Motor neuron (in vitro differentiated cells): ENCODE measurements at regions of chr18 and their contacts with region 1.

Region 1: DNA sequence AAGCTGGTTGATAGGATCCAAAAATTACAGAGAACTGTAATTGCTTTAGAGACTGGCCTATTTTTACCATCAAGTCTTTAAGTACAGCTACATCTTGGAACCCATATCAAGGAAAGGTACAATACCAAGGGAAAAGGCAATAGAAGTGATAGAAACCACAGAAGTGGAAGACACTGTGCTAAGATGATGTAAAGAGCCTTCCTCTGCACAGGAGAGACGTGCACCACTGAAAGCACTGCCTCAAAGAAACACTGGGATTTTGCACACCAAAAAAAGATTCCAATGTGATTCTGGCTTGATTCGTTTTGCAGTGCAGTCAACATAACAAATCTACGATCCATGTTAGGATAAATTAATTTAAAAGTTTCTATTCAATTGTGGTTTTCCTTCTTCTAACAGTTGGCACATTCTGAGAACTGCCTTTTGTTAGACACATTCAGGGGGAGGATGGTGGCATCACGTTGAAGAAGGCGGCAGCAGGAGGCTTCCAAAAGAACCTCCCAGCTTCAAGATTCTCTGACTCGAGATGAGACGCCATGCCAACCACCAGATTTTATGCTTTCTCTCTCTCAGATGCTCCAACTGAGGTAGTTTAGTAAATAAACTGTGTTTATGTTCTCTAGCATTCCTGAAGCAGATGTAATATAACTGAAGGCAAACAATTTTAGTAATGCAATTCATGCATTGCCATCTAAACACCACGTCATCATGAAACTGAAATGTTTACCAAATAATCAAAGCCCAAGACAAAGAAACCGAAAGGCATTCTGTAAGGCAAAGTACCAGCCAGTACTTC is 102.9 kb downstream of the BCL2 start:
- ATAC-seq: peak in 2 of 8 experiments; percentile 21 to 55
- H3K4me3 ChIP-seq: no peak overlapping the region
- H3K27ac ChIP-seq: no peak overlapping the region
- H3K4me1 ChIP-seq: peaks cover 8 to 11% of the 10 kb centered on the region in 2 donors

Region 2: GRCh38 chr18:63016270-63016669 is 200.4 kb before region 1 on chr18:
- in situ Hi-C with region 1: no loop called
- ATAC-seq: peak in 5 of 8 experiments; percentile 51 to 78 (median 65)
- H3K4me3 ChIP-seq: no peak overlapping the region
- H3K27ac ChIP-seq: no peak overlapping the region
- H3K4me1 ChIP-seq: no peaks in the 10 kb centered on the region

Region 3: GRCh38 chr18:63320046-63320689 is 103.5 kb after region 1 on chr18:
- in situ Hi-C with region 1: loop called in 1 of 9 experiments (anchors 25 kb)
- ATAC-seq: peak; percentile 78 to 85 (median 84)
- H3K4me3 ChIP-seq: peak overlapping the region; percentile 62 to 94 (median 75)
- H3K27ac ChIP-seq: peak overlapping the region; percentile 85 to 86
- H3K4me1 ChIP-seq: peaks cover 18 to 29% of the 10 kb centered on the region in 2 donors

Region 4: GRCh38 chr18:63487676-63488075 is 271.0 kb after region 1 on chr18:
- in situ Hi-C with region 1: no loop called
- ATAC-seq: no peak
- H3K4me3 ChIP-seq: no peak overlapping the region
- H3K27ac ChIP-seq: no peak overlapping the region
- H3K4me1 ChIP-seq: peaks cover 3 to 4% of the 10 kb centered on the region in 2 donors

Region 5: GRCh38 chr18:63730773-63731172 is 514.1 kb after region 1 on chr18:
- in situ Hi-C with region 1: no loop called
- ATAC-seq: peak in 2 of 8 experiments; percentile 71 to 77
- H3K4me3 ChIP-seq: no peak overlapping the region
- H3K27ac ChIP-seq: no peak overlapping the region
- H3K4me1 ChIP-seq: no peaks in the 10 kb centered on the region